K562 (cell line): ENCODE measurements at regions of chr6 and their contacts with region 1.

Region 1: DNA sequence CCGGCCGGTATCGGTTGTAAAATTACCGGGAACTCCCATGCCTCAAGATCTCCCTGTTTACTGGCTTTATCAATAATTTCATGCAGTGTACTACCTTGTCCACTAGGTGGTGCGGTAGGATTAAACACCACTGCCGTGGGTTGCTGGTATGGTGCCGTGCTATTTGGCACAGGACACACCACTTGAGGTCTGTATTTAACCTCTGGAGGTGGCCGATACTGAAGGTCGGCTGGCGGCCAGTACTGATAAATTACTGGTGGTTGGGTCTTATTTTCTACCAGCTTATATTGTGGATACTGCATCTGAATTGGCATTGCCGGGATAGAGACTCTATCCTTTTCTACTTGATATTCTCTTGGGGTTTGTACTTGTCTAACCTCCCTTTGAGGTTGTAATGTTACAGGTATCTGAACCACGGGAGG is 14.3 kb upstream of the PTCRA start:
- DNase-seq: peak; percentile 74 to 93 (median 77)
- ATAC-seq: peak; percentile 99
- H3K4me3 ChIP-seq: no peak overlapping the region
- H3K27ac ChIP-seq: no peak overlapping the region
- H3K4me1 ChIP-seq: peaks cover 0 to 7% of the 10 kb centered on the region in 2 experiments; a peak in 3 of 5 replicates
- H3K27me3 ChIP-seq: no peaks in the 10 kb centered on the region
- CTCF ChIP-seq: peak; percentile 91 to 98 (median 92)
- EP300 ChIP-seq: peak; percentile 39; the same call in 1 of the 2 replicates
- POLR2A ChIP-seq: no peak
- RAD21 ChIP-seq: peak; percentile 98 to 99

Region 2: GRCh38 chr6:42166444-42167141 is 735.0 kb before region 1 on chr6:
- CTCF ChIA-PET with region 1: interaction called, 7 read pairs
- POLR2A ChIA-PET with region 1: no interaction called
- in situ Hi-C with region 1: no loop called
- intact Hi-C with region 1: loop called (anchors 2 kb)
- DNase-seq: peak; percentile 92 to 96 (median 94)
- ATAC-seq: peak; percentile 93
- H3K4me3 ChIP-seq: no peak overlapping the region
- H3K27ac ChIP-seq: peak overlapping the region; percentile 38; the same call in 2 of the 3 replicates
- H3K4me1 ChIP-seq: peaks cover 4 to 6% of the 10 kb centered on the region in 2 experiments; a peak in 1 of 5 replicates
- H3K27me3 ChIP-seq: peaks cover 5 to 24% of the 10 kb centered on the region in 2 experiments; a peak in 3 of 5 replicates
- CTCF ChIP-seq: peak; percentile 93 to 99 (median 94)
- EP300 ChIP-seq: no peak
- POLR2A ChIP-seq: no peak
- RAD21 ChIP-seq: peak; percentile 98

Region 3: DNA sequence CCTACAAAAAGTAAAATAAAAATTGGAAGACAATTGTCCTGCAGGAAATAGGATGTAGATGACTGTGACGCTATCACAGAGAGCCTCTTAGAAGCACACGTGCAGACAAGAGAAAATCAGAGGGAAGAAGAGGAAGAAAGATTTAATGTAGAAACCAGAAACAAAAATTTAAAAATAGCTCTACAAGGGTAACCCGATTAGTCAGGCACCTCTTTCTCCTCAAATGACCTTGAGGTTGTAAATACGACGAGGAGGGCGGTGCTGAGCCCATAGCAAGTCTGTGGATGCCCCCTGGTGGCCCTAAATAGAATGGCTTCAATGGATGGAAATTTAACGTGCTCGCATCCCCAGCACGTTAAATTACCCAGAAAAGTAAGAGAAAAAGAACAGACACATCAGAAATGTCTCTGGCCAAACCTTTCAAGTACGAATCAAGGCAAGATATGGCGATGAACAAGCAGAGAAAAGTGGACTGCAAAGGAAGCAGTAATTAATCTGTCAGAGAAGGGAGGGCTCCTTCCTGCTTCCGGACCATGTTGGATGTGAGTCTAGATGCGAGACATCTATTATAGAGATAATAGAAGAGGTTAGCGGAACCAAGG is 175.0 kb before region 1 on chr6:
- CTCF ChIA-PET with region 1: no interaction called
- POLR2A ChIA-PET with region 1: no interaction called
- in situ Hi-C with region 1: no loop called
- intact Hi-C with region 1: loop called (anchors 2 kb)
- DNase-seq: peak; percentile 87 to 92 (median 90)
- ATAC-seq: peak; percentile 90
- H3K4me3 ChIP-seq: no peak overlapping the region
- H3K27ac ChIP-seq: no peak overlapping the region
- H3K4me1 ChIP-seq: peaks cover 6 to 8% of the 10 kb centered on the region in 2 experiments; a peak in 4 of 5 replicates
- H3K27me3 ChIP-seq: peaks cover 7 to 11% of the 10 kb centered on the region in 2 experiments
- CTCF ChIP-seq: peak; percentile 94 to 98 (median 98)
- EP300 ChIP-seq: peak; percentile 27; the same call in 1 of the 2 replicates
- POLR2A ChIP-seq: no peak
- RAD21 ChIP-seq: peak; percentile 99

Region 4: GRCh38 chr6:42889815-42890214 is 11.7 kb before region 1 on chr6:
- CTCF ChIA-PET with region 1: no interaction called
- POLR2A ChIA-PET with region 1: no interaction called
- in situ Hi-C with region 1: no loop called
- intact Hi-C with region 1: no loop called
- DNase-seq: peak in 1 of 4 experiments; percentile 8
- ATAC-seq: peak; percentile 25
- H3K4me3 ChIP-seq: no peak overlapping the region
- H3K27ac ChIP-seq: no peak overlapping the region
- H3K4me1 ChIP-seq: peaks cover 15 to 20% of the 10 kb centered on the region in 2 experiments
- H3K27me3 ChIP-seq: no peaks in the 10 kb centered on the region
- CTCF ChIP-seq: no peak
- EP300 ChIP-seq: no peak
- POLR2A ChIP-seq: peak; percentile 9; the same call in 1 of the 2 replicates
- RAD21 ChIP-seq: no peak

Region 5: DNA sequence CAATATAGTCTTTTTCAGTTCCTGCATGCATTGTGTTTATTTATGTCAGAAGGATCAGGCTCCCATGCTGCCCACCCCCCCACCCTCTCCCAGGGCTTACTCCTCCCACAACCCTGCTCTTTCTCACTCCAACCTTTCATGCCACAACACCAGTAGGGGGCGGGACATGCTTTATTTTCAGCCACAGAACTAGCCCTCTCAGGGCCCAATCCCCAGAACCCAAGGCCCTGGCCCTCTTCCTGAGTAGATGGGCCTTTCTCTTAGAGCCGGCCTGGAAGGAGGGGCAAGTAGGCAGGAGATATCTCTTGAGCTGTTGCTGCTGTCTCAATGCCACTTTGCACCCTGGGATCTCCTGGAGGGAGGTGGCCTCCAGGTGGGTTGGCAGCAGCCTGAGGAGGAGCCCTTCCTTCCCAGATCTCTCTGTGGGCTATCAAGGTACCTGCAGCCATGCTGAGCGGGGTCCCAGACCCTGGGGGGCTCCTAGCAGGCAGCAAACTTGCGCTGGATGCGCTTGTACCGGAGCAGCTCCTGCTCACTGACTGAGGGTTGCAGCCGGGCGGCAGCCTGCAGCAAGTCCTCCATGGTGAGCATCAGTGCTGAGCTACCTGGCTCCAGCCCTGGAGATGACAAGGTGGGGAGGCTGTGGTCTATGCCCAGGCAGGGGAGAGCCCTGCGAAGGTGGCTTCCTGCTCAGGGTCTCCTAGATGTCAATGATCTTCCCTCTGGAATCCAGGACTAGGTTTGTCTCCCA is 62.5 kb after region 1 on chr6:
- CTCF ChIA-PET with region 1: no interaction called
- POLR2A ChIA-PET with region 1: no interaction called
- in situ Hi-C with region 1: no loop called
- intact Hi-C with region 1: loop called (anchors 5 kb)
- DNase-seq: peak; percentile 75 to 87 (median 81)
- ATAC-seq: peak; percentile 98
- H3K4me3 ChIP-seq: no peak overlapping the region
- H3K27ac ChIP-seq: no peak overlapping the region
- H3K4me1 ChIP-seq: peaks cover 0 to 14% of the 10 kb centered on the region in 2 experiments; a peak in 2 of 5 replicates
- H3K27me3 ChIP-seq: no peaks in the 10 kb centered on the region
- CTCF ChIP-seq: peak; percentile 64 to 85 (median 73)
- EP300 ChIP-seq: no peak
- POLR2A ChIP-seq: no peak
- RAD21 ChIP-seq: peak; percentile 51 to 80; a peak in 3 of 4 replicates

Region 6: GRCh38 chr6:42984001-42984923 is 82.7 kb after region 1 on chr6 and contains the start of gene PPP2R5D:
- CTCF ChIA-PET with region 1: no interaction called
- POLR2A ChIA-PET with region 1: no interaction called
- in situ Hi-C with region 1: no loop called
- intact Hi-C with region 1: no loop called
- DNase-seq: peak; percentile 93 to 100 (median 96)
- ATAC-seq: peak; percentile 96
- H3K4me3 ChIP-seq: peak within 1 kb of the TSS; percentile 64
- H3K27ac ChIP-seq: peak within 1 kb of the TSS; percentile 69
- H3K4me1 ChIP-seq: peaks cover 38 to 39% of the 10 kb centered on the region in 2 experiments
- H3K27me3 ChIP-seq: no peaks in the 10 kb centered on the region
- CTCF ChIP-seq: no peak; a peak in 1 of 6 replicates
- EP300 ChIP-seq: no peak
- POLR2A ChIP-seq: peak; percentile 90
- RAD21 ChIP-seq: no peak
- polyA plus RNA-seq, gene PPP2R5D: 1.3 to 1.9 TPM

Region 7: DNA sequence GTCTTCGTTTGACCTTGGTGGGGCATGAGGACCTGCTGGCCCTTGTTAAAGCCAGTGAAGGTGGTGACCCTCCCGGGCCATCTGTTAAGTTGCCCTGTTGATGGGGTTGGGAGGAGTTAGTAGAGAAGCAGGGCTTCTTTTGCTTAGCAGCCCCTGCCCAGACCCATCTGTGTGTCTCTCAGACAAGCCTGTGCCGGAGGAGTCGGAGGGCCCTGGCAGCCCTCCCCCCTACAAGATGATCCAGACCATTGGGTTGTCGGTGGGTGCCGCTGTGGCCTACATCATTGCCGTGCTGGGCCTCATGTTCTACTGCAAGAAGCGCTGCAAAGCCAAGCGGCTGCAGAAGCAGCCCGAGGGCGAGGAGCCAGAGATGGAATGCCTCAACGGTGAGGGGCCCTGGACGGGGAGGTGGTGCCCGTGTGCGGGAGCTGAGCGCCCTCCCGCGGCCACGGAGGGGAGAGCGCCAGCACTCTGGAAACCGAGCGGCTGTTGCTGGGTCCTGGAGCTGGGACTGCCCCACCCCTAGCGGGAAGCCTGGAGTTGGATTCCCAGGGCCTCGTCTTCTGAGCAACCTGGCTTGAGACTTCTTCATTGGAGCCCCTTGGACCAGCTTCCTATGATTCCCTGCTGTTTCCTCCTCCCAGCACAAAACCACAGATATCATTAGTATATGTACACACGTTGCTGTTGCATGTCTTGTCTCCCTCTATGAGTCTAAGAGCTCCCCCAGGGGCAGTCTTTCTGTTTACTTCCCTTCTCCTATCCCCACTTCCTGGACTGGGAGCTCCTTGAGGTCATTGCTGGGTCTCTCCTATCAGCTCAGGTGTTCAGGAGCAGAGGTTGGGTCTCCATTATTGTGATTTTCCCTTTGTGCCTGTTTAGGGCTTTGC is 241.9 kb after region 1 on chr6:
- CTCF ChIA-PET with region 1: interaction called, 20 read pairs
- POLR2A ChIA-PET with region 1: no interaction called
- in situ Hi-C with region 1: loop called (anchors 5 kb)
- intact Hi-C with region 1: loop called (anchors 1 kb)
- DNase-seq: peak; percentile 91 to 98 (median 96)
- ATAC-seq: peak; percentile 99
- H3K4me3 ChIP-seq: no peak overlapping the region
- H3K27ac ChIP-seq: peak overlapping the region; percentile 47; the same call in 2 of the 3 replicates
- H3K4me1 ChIP-seq: peaks cover 5 to 21% of the 10 kb centered on the region in 2 experiments; a peak in 4 of 5 replicates
- H3K27me3 ChIP-seq: no peaks in the 10 kb centered on the region; a peak in 1 of 5 replicates
- CTCF ChIP-seq: peak; percentile 98 to 99 (median 99)
- EP300 ChIP-seq: no peak; the same call in 1 of the 2 replicates
- POLR2A ChIP-seq: no peak
- RAD21 ChIP-seq: peak; percentile 99 to 100

Region 8: DNA sequence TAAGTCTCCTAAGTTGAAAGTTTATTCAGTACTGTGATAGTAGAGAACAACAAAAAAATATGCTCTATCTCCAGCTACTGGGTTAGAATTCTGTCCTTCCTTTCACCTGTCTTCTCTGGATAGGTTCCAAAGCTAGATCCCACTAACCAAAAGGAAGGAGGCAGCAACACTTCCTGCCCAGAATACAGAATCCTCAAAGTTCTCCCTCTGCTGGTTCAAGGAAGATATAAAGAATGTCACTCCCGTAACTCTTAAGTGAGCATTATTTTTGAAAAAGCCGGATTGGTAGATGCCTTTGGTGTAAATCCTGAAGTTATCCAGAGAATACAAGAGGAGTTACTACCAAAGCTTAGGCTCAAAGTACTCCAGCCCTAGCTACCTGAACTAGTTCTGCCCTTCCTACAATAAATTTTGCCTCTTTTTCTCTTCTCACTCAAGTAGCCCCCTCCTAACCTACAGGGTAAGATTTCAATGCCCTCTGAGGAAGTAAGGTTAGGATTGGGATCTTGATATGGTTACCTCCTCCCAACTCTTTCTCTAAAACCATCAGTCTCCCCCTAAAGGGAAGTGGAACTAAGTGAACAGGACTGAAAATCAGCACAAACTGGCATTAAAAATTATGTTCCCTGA is 433.0 kb after region 1 on chr6:
- CTCF ChIA-PET with region 1: interaction called, 4 read pairs
- POLR2A ChIA-PET with region 1: no interaction called
- in situ Hi-C with region 1: no loop called
- intact Hi-C with region 1: loop called (anchors 1 kb)
- DNase-seq: peak; percentile 56 to 74 (median 68)
- ATAC-seq: peak; percentile 96
- H3K4me3 ChIP-seq: no peak overlapping the region
- H3K27ac ChIP-seq: no peak overlapping the region
- H3K4me1 ChIP-seq: peaks cover 0 to 2% of the 10 kb centered on the region in 2 experiments; a peak in 1 of 5 replicates
- H3K27me3 ChIP-seq: no peaks in the 10 kb centered on the region
- CTCF ChIP-seq: peak; percentile 70 to 84 (median 82)
- EP300 ChIP-seq: no peak
- POLR2A ChIP-seq: no peak
- RAD21 ChIP-seq: peak; percentile 68 to 82

Region 9: DNA sequence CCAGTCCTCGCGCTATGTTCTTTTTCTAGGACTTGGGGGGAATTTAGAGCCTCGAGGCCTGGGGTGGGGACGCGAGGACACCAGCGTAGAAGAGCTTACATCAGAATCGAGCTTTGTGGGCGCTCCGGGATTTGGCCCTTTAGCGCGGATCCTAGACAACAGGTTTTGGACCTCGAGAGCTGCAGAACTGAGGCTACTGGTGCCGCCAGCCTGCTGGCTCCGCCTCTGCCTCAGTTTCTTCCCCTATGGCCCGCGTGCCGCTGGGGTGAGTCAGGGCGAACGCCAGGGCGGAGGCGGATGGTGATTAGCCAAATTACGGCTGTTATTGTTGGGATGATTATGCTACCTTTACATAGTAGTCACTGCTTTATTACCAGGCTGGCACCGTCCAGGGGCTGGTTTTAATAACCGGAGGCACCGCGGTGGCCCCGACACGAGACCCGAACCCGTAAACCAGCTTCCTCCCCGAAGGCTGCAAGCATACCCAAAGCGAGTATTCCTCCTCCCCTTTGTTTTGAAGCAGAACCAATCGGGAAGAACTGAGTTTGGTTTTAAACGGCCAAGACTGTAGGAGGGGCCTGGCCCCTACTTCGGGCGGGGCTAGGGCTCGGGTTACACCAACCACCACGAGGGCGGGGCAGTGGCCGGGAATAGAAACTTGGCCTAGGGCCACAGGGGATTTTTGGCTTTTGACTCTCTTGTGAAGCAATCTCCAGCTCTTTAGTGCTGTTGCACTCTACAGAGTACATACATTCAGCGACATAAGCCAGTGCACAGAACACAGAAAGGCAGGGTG is 728.2 kb after region 1 on chr6:
- CTCF ChIA-PET with region 1: no interaction called
- POLR2A ChIA-PET with region 1: no interaction called
- in situ Hi-C with region 1: no loop called
- intact Hi-C with region 1: no loop called
- DNase-seq: peak; percentile 92 to 99 (median 96)
- ATAC-seq: peak; percentile 75
- H3K4me3 ChIP-seq: peak overlapping the region; percentile 58
- H3K27ac ChIP-seq: peak overlapping the region; percentile 97
- H3K4me1 ChIP-seq: peaks cover 40 to 59% of the 10 kb centered on the region in 2 experiments
- H3K27me3 ChIP-seq: no peaks in the 10 kb centered on the region; a peak in 1 of 5 replicates
- CTCF ChIP-seq: no peak
- EP300 ChIP-seq: peak; percentile 53; the same call in 1 of the 2 replicates
- POLR2A ChIP-seq: peak; percentile 97
- RAD21 ChIP-seq: peak in 1 of 2 experiments; percentile 5; a peak in 2 of 4 replicates